ENCODE measurements at regions of chr10 and their contacts with region 1.

Region 1: DNA sequence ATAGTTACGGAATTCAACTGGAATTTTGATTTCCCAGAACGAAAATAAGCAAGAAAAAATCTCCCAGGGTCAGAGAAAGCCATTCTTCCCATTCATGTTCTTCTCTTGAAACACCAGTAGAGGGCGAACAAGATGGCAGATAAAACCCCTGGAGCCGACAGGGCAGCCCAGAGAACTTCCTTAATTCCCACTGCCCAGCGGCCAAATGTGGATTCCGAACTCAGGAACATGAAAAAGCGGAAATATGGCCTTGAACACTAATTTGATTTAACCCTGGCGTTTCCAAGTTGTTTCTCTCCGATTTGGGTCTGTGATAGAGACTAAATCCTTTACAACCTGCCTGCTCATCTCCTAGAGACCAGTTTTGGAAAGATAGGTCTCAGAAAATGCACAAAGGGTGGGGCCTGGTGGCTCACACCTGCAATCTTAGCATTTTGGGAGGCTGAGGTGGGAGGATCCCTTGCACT is 100.7 kb upstream of the WAC start:
- DNase-seq: peak; percentile 27
- H3K4me3 Mint-ChIP-seq: no peak overlapping the region
- H3K27ac Mint-ChIP-seq: no peak overlapping the region
- H3K4me1 Mint-ChIP-seq: peaks cover 5% of the 10 kb centered on the region
- H3K27me3 Mint-ChIP-seq: peaks cover 3% of the 10 kb centered on the region

Region 2: GRCh38 chr10:28496481-28496961 is 64.3 kb after region 1 on chr10:
- CTCF ChIA-PET with region 1: no interaction called
- POLR2A ChIA-PET with region 1: no interaction called
- intact Hi-C with region 1: no loop called
- DNase-seq: no peak
- H3K4me3 Mint-ChIP-seq: no peak overlapping the region
- H3K27ac Mint-ChIP-seq: no peak overlapping the region
- H3K4me1 Mint-ChIP-seq: peaks cover 2% of the 10 kb centered on the region
- H3K27me3 Mint-ChIP-seq: no peaks in the 10 kb centered on the region

Region 3: DNA sequence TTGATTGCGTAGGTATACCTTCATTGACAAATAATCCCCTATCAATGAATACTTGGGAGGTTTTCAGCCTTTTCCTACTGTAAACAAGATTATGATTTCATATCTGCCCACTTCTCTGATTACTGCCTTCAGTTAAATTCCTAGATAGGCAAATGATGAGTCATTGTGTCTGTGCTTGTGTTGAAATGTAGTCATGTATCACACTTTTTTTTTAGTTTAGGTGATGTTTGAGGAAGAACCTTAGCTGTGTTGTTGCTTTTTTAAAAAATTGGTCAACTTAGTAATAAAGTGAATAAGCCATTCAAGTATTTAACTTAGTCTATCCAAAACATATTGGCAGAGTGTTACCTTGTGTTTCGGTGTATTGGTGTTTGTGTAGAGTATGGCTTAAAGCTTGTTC is 160.7 kb after region 1 on chr10:
- CTCF ChIA-PET with region 1: no interaction called
- POLR2A ChIA-PET with region 1: no interaction called
- intact Hi-C with region 1: loop called (anchors 10 kb)
- DNase-seq: no peak
- H3K4me3 Mint-ChIP-seq: peak overlapping the region; percentile 23
- H3K27ac Mint-ChIP-seq: peak overlapping the region; percentile 71
- H3K4me1 Mint-ChIP-seq: peaks cover 58% of the 10 kb centered on the region
- H3K27me3 Mint-ChIP-seq: no peaks in the 10 kb centered on the region

Region 4: GRCh38 chr10:28991326-28992270 is 559.4 kb after region 1 on chr10:
- CTCF ChIA-PET with region 1: no interaction called
- POLR2A ChIA-PET with region 1: no interaction called
- intact Hi-C with region 1: loop called (anchors 5 kb)
- DNase-seq: peak; percentile 50
- H3K4me3 Mint-ChIP-seq: no peak overlapping the region
- H3K27ac Mint-ChIP-seq: no peak overlapping the region
- H3K4me1 Mint-ChIP-seq: peaks cover 4% of the 10 kb centered on the region
- H3K27me3 Mint-ChIP-seq: peaks cover 1% of the 10 kb centered on the region

Measured in activated CD4-positive, alpha-beta memory T cell treated with anti-CD3 and anti-CD28 coated beads for 36 hours (primary cell).